PC-9 (cell line): ENCODE measurements at regions of chr18 and their contacts with region 1.

Region 1: DNA sequence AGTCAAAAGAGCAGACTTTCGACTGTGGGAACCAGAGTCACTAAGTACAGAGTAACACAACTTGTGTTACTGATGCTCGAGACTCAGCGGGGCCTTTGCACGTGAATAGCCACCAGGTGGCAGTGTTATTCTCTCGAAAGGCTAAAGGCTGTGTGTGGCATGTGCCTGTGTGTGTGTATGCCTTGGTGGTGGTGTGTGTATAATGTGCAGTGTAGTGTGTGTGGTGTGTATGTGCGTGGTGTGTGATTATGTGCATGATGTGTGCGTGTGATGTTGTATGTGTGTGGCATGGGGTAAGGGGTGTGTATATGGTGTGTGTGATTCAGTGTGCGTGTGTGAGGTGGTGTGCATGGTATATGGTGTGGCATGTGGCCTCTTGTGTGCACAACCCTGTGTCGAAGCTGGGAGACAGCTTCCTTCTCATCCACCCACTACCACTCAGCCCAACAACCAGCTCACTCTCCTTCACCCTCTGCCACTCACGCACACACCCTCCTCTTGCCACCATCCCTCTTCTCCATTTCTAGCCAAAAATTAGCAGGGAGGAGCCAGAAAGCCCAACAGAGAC is 83.0 kb upstream of the ZNF532 start:
- DNase-seq: peak; percentile 45 to 65
- H3K4me3 ChIP-seq: no peak overlapping the region
- H3K27ac ChIP-seq: no peak overlapping the region
- H3K4me1 ChIP-seq: peaks cover 23% of the 10 kb centered on the region
- H3K27me3 ChIP-seq: no peaks in the 10 kb centered on the region
- CTCF ChIP-seq: peak; percentile 89

Region 2: GRCh38 chr18:58850784-58851469 is 69.2 kb after region 1 on chr18:
- CTCF ChIA-PET with region 1: no interaction called
- POLR2A ChIA-PET with region 1: no interaction called
- intact Hi-C with region 1: loop called (anchors 2 kb)
- DNase-seq: no peak
- H3K4me3 ChIP-seq: no peak overlapping the region
- H3K27ac ChIP-seq: peak overlapping the region; percentile 72
- H3K4me1 ChIP-seq: peaks cover 10% of the 10 kb centered on the region
- H3K27me3 ChIP-seq: no peaks in the 10 kb centered on the region
- CTCF ChIP-seq: no peak

Region 3: GRCh38 chr18:58863539-58864145 is 81.9 kb after region 1 on chr18:
- CTCF ChIA-PET with region 1: no interaction called
- POLR2A ChIA-PET with region 1: no interaction called
- intact Hi-C with region 1: loop called (anchors 2 kb)
- DNase-seq: peak; percentile 33 to 49
- H3K4me3 ChIP-seq: peak overlapping the region; percentile 49; the same call in 1 of the 2 replicates
- H3K27ac ChIP-seq: no peak overlapping the region
- H3K4me1 ChIP-seq: peaks cover 14% of the 10 kb centered on the region
- H3K27me3 ChIP-seq: no peaks in the 10 kb centered on the region
- CTCF ChIP-seq: no peak

Region 4: GRCh38 chr18:59008301-59008974 is 226.7 kb after region 1 on chr18:
- CTCF ChIA-PET with region 1: interaction called, 8 read pairs
- POLR2A ChIA-PET with region 1: interaction called, 5 read pairs
- intact Hi-C with region 1: loop called (anchors 1 kb)
- DNase-seq: peak; percentile 45 to 88
- H3K4me3 ChIP-seq: peak overlapping the region; percentile 52; the same call in 1 of the 2 replicates
- H3K27ac ChIP-seq: peak overlapping the region; percentile 82
- H3K4me1 ChIP-seq: peaks cover 18% of the 10 kb centered on the region
- H3K27me3 ChIP-seq: no peaks in the 10 kb centered on the region
- CTCF ChIP-seq: no peak

Region 5: DNA sequence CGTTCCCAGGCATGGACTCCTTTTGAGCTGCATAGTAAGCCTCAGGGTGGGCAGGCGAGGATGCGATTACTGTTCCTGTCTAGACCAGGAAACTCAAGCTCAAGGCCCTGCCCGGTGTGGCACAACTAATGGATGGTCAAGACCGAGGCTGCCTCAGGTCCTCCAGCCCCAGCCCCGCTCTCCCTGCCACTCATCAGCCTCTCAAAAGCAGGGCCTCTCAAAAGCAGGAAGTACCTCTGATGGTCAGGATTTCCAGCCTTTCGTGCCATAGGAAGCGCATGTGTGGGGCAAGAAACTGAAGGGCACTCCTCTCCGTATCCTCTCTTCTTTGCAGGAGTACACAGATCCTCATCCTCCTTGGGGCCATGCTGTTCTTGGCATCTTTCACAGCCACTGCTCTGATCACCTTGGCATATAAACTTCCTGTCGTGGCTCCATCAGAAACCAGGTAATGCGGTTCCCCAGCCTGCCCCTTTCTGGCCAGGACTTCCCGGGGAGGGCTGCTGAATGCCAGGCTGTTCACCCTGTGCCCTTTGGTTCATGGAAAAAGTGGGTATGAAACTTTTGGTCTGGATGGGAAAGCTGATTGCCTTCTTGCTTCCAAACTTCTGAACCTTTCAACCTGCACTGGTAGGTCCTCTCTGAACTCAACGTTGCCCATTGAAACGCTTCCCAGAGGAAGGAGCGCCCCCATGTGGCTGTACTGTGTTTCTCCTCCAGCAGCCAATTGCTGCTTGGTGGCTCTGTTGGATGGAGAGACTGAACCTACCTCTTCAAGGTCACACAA is 275.2 kb after region 1 on chr18:
- CTCF ChIA-PET with region 1: interaction called, 3 read pairs
- POLR2A ChIA-PET with region 1: no interaction called
- intact Hi-C with region 1: loop called (anchors 1 kb)
- DNase-seq: peak; percentile 44 to 62
- H3K4me3 ChIP-seq: no peak overlapping the region
- H3K27ac ChIP-seq: no peak overlapping the region
- H3K4me1 ChIP-seq: no peaks in the 10 kb centered on the region
- H3K27me3 ChIP-seq: no peaks in the 10 kb centered on the region
- CTCF ChIP-seq: peak; percentile 91

Region 6: GRCh38 chr18:59070181-59070912 is 288.6 kb after region 1 on chr18:
- CTCF ChIA-PET with region 1: interaction called, 3 read pairs
- POLR2A ChIA-PET with region 1: no interaction called
- intact Hi-C with region 1: loop called (anchors 1 kb)
- DNase-seq: peak; percentile 64 to 66
- H3K4me3 ChIP-seq: no peak overlapping the region
- H3K27ac ChIP-seq: no peak overlapping the region
- H3K4me1 ChIP-seq: no peaks in the 10 kb centered on the region
- H3K27me3 ChIP-seq: no peaks in the 10 kb centered on the region
- CTCF ChIP-seq: peak; percentile 87